IMR-90 (cell line): ENCODE measurements at regions of chr11 and their contacts with region 1.

Region 1: GRCh38 chr11:131674051-131674755 is 303.8 kb downstream of the NTM start:
- DNase-seq: peak; percentile 86
- ATAC-seq: peak; percentile 97
- H3K4me3 ChIP-seq: no peak overlapping the region
- H3K27ac ChIP-seq: no peak overlapping the region
- H3K4me1 ChIP-seq: peaks cover 2% of the 10 kb centered on the region; the same call in 1 of the 2 replicates
- H3K27me3 ChIP-seq: peaks cover 3% of the 10 kb centered on the region; the same call in 1 of the 2 replicates
- CTCF ChIP-seq: peak; percentile 99
- POLR2A ChIP-seq: peak; percentile 56; the same call in 1 of the 2 replicates
- RAD21 ChIP-seq: peak; percentile 98

Region 2: GRCh38 chr11:131025020-131025419 is 649.2 kb before region 1 on chr11:
- CTCF ChIA-PET with region 1: interaction called, 15 read pairs
- POLR2A ChIA-PET with region 1: no interaction called
- dilution Hi-C with region 1: no loop called
- in situ Hi-C with region 1: no loop called
- intact Hi-C with region 1: loop called (anchors 1 kb)
- DNase-seq: peak; percentile 72
- ATAC-seq: peak; percentile 99
- H3K4me3 ChIP-seq: no peak overlapping the region
- H3K27ac ChIP-seq: no peak overlapping the region
- H3K4me1 ChIP-seq: no peaks in the 10 kb centered on the region
- H3K27me3 ChIP-seq: no peaks in the 10 kb centered on the region
- CTCF ChIP-seq: peak; percentile 81
- POLR2A ChIP-seq: no peak
- RAD21 ChIP-seq: peak; percentile 91

Region 3: DNA sequence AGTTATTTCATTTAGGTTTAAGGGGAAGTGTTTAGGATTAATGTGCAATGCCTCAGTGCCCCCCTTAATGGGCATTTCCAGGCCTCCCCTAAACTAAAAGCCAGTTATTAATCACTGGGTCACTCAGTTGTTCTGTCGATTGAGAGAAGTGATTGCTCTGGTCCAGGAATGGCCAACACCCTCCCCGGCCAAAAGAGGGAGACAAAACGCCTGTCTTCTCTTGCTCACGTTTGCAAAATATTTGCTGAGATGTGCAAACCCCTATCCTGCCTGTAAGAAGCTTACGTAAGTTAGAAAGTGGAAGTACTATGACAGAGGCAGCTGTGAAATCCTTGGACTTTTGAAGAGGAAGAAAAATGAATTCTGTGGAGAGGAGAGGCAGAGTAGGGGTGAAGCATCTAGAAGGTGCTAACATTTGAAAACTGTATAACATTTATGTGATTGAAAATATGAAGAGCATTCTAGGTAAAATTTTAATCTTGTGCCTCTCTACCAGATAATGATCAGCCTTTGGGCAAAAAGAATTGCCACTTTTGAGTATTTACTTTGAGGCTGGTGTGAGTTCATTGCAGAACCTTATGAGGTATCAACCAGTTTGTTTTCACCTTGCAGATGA is 266.1 kb before region 1 on chr11:
- CTCF ChIA-PET with region 1: interaction called, 3 read pairs
- POLR2A ChIA-PET with region 1: no interaction called
- dilution Hi-C with region 1: no loop called
- in situ Hi-C with region 1: no loop called
- intact Hi-C with region 1: loop called (anchors 1 kb)
- DNase-seq: peak; percentile 28
- ATAC-seq: no peak
- H3K4me3 ChIP-seq: no peak overlapping the region
- H3K27ac ChIP-seq: no peak overlapping the region
- H3K4me1 ChIP-seq: no peaks in the 10 kb centered on the region
- H3K27me3 ChIP-seq: no peaks in the 10 kb centered on the region
- CTCF ChIP-seq: peak; percentile 47
- POLR2A ChIP-seq: no peak
- RAD21 ChIP-seq: 0 out of 2 replicates have a peak, but pooled peaks have one; percentile 18

Region 4: GRCh38 chr11:131662317-131662972 is 11.8 kb before region 1 on chr11:
- CTCF ChIA-PET with region 1: interaction called, 11 read pairs
- POLR2A ChIA-PET with region 1: no interaction called
- dilution Hi-C with region 1: no loop called
- in situ Hi-C with region 1: no loop called
- intact Hi-C with region 1: no loop called
- DNase-seq: no peak
- ATAC-seq: no peak
- H3K4me3 ChIP-seq: no peak overlapping the region
- H3K27ac ChIP-seq: no peak overlapping the region
- H3K4me1 ChIP-seq: peaks cover 2% of the 10 kb centered on the region; the same call in 1 of the 2 replicates
- H3K27me3 ChIP-seq: peaks cover 4% of the 10 kb centered on the region
- CTCF ChIP-seq: no peak
- POLR2A ChIP-seq: no peak
- RAD21 ChIP-seq: no peak

Region 5: DNA sequence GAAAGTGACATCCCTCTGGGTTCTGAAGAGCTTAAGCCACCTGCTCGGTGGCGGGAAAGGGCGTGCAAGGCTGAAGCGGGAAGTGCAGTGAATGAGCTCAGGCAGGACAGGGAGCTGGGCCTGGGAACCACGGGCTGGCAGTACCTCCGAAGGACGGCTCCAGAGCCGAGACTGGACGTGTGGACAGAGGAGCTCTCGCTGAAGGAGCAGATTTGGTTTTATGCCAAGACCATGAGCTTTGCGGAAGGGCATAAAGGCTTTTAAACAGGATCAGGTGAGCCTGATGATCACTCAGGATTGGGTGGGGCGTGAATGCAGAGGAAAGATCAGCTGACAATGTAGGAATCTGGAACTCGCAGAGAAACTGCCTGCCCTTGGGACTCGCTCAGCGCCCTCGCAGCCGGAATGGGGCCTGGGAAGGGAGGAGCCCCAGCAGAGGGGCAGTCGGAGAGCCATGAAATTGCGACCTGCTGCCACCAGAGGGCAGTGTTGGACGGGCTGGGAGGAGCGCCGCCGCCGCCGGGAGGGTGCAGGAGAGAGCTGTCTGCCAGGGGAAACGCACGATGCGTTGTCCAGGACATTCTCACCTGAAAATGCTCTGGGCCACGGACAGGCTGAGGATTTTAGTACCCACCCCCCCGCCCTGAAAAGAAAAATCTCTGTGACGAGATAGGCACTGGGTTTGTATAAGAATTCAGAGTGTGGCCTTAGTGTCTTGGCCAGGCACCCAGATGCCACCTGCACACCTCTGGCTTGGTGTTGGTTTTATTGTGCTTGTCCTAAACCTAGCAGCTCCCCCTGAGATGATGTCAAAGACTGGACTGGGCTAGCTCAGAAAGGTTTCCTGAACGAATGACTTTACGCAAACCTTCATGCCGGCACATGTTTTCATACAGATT is 20.6 kb after region 1 on chr11:
- CTCF ChIA-PET with region 1: interaction called, 11 read pairs
- POLR2A ChIA-PET with region 1: no interaction called
- dilution Hi-C with region 1: no loop called
- in situ Hi-C with region 1: no loop called
- intact Hi-C with region 1: no loop called
- DNase-seq: peak; percentile 69
- ATAC-seq: peak; percentile 99
- H3K4me3 ChIP-seq: no peak overlapping the region
- H3K27ac ChIP-seq: no peak overlapping the region
- H3K4me1 ChIP-seq: 0 out of 2 replicates have a peak, but pooled peaks cover 2% of the 10 kb centered on the region
- H3K27me3 ChIP-seq: no peaks in the 10 kb centered on the region; the same call in 1 of the 2 replicates
- CTCF ChIP-seq: peak; percentile 99
- POLR2A ChIP-seq: no peak
- RAD21 ChIP-seq: peak; percentile 92